ENCODE measurements at regions of chr2 and their contacts with region 1.

Region 1: GRCh38 chr2:85064927-85065577 is 68.1 kb upstream of the TCF7L1 start:
- DNase-seq: no peak
- H3K4me3 ChIP-seq: no peak overlapping the region
- H3K27ac ChIP-seq: no peak overlapping the region
- H3K4me1 ChIP-seq: peaks cover 0 to 20% (median 7%) of the 10 kb centered on the region in 3 donors
- H3K27me3 ChIP-seq: no peaks in the 10 kb centered on the region
- CTCF ChIP-seq: no peak
- POLR2A ChIP-seq: no peak

Region 2: GRCh38 chr2:85302121-85302520 is 237.1 kb after region 1 on chr2:
- intact Hi-C with region 1: loop called (anchors 5 kb)
- DNase-seq: no peak
- H3K4me3 ChIP-seq: no peak overlapping the region
- H3K27ac ChIP-seq: no peak overlapping the region
- H3K4me1 ChIP-seq: peaks cover 0 to 8% (median 0%) of the 10 kb centered on the region in 3 donors
- H3K27me3 ChIP-seq: no peaks in the 10 kb centered on the region
- CTCF ChIP-seq: no peak
- POLR2A ChIP-seq: no peak

Measured in esophagus squamous epithelium (tissue), 5 donors.